ENCODE measurements at regions of chr3 and their contacts with region 1.

Region 1: DNA sequence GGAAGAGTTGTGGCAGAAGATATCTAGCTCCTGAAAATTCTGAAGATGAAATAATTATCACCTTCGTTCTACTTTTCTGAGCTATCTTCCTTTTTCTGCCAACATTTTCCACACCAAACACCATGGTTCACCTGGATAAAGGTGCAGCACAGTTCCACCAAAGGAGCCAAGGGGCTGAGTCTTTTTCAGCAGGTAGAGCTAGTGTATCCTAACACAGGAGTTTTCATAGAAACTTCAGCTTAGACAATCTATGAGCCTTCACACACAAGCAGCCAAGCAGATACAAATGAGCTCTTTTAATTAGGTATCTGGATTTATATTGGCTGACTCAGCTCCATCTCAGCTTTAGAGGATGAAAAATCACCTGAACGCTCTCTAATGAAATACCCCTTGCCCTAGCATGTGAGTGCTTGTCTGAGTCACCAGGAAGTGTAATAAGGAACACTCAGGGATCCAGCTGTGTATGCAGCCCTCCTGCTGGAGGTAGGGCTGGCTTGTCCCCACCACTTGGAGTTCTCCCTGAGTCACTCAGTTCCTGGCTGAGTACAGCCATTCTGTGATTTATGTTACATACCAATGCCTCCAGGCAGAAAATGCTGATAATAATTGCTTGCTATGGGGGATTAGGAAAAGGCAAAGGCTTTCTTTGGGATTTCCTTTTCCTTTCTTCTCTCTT is 385.7 kb downstream of the LSAMP start:
- DNase-seq: peak; percentile 98
- H3K4me3 ChIP-seq: no peak overlapping the region
- H3K27ac ChIP-seq: peak overlapping the region; percentile 62
- H3K4me1 ChIP-seq: peaks cover 13% of the 10 kb centered on the region
- H3K27me3 ChIP-seq: no peaks in the 10 kb centered on the region
- CTCF ChIP-seq: peak in 1 of 2 donors; percentile 20

Region 2: DNA sequence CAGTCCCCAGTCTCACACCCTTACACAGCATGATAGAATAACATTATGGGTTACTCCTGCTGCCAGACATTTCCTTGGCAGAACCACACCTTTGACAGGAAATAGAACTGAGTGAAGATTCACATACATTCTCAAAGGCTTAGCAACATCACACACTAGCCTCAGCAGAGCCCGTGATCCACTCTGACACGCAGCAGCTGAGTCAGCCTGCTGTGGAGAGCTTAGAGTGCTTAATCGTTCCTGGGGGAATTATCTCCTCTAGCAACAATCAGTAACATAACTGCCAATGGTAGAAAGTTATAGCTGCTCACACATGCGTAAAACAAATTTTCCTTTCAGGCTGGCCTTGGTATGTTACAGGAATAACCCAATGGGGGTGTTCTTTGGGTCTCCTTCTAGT is 54.2 kb before region 1 on chr3:
- CTCF ChIA-PET with region 1: no interaction called
- dilution Hi-C with region 1: no loop called
- in situ Hi-C with region 1: no loop called
- intact Hi-C with region 1: loop called (anchors 2 kb)
- DNase-seq: peak; percentile 95
- H3K4me3 ChIP-seq: no peak overlapping the region
- H3K27ac ChIP-seq: peak overlapping the region; percentile 91
- H3K4me1 ChIP-seq: peaks cover 36% of the 10 kb centered on the region
- H3K27me3 ChIP-seq: no peaks in the 10 kb centered on the region
- CTCF ChIP-seq: no peak

Region 3: DNA sequence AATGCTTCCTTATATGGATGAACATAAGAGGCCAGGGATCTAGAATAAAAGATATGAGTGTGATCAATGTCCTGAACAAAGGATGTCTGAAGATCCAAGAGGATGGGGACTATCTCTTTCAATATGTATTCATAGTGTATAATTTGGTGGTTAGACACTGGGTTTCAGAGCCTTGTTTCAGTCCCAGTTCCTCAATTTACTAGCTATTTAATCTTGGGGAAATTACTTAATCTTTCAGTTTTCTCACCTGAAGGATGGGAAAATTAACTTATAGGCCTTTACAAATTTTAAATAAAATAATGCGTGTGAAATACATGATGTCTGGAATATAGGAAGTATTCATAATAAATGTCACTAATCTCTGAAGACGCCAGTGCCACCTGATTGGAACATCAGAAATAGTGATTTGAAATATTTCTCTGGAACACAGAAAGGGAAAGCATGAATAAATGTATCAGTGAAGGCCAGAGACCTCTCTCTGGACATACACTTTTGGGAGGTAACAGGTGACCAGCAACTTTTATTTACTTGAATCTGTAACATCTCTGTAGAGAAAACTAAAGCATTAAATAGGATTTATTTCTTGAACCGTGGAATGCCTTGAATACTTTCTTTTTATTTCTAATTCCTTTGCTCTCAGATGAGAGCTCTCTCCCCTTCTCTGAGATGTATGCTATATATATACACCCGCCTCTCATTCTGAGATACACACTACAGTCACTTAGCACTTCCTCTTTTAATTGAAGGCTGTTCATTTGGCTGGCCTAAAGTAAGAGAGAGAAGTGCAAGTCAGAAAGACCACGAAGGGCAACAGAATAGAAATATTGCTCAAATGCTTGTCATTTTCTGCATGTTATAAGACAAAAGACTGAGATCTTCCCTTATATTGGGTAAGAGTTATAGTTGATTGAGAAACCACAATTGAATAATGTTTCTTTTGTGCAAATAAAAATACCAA is 21.3 kb before region 1 on chr3:
- CTCF ChIA-PET with region 1: no interaction called
- dilution Hi-C with region 1: no loop called
- in situ Hi-C with region 1: no loop called
- intact Hi-C with region 1: no loop called
- DNase-seq: peak; percentile 33
- H3K4me3 ChIP-seq: no peak overlapping the region
- H3K27ac ChIP-seq: no peak overlapping the region
- H3K4me1 ChIP-seq: peaks cover 16% of the 10 kb centered on the region
- H3K27me3 ChIP-seq: no peaks in the 10 kb centered on the region
- CTCF ChIP-seq: no peak

Region 4: DNA sequence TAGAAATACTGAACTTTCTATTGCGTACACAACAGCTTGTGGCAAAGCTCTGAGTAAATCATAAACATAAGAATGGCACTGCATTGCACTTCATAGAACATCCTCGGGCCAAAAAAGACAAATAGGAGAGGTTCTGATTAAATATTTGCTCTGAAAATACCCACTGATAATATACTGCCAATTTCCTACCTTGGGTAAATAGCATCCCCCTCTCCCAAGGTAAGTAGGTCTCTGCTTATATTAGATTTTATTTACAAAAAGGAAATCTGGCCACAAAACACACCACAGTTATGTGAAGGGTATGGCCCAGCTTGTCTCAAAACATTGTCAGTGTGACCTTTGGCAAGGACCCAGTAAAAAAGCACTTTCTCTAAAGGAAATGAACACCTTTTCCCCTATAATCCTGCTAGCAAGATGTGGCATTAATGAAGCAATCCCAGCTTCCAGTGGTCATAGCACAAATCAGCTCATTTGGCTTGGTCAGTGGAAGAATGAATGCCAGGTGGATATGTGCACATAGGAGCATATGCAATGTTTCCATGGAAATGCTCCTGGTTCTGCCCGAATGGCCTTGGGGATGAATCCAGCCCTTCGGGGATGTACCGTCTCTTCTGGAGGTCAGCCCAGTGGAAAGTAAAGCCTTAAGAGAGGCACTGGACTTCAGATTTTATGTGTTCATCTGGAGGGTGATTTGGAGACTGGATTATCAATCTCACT is 69.8 kb after region 1 on chr3:
- CTCF ChIA-PET with region 1: no interaction called
- dilution Hi-C with region 1: no loop called
- in situ Hi-C with region 1: no loop called
- intact Hi-C with region 1: loop called (anchors 10 kb)
- DNase-seq: no peak
- H3K4me3 ChIP-seq: no peak overlapping the region
- H3K27ac ChIP-seq: no peak overlapping the region
- H3K4me1 ChIP-seq: no peaks in the 10 kb centered on the region
- H3K27me3 ChIP-seq: no peaks in the 10 kb centered on the region
- CTCF ChIP-seq: no peak

Region 5: GRCh38 chr3:116140100-116140689 is 80.6 kb after region 1 on chr3:
- CTCF ChIA-PET with region 1: no interaction called
- dilution Hi-C with region 1: no loop called
- in situ Hi-C with region 1: no loop called
- intact Hi-C with region 1: no loop called
- DNase-seq: peak; percentile 15
- H3K4me3 ChIP-seq: no peak overlapping the region
- H3K27ac ChIP-seq: no peak overlapping the region
- H3K4me1 ChIP-seq: no peaks in the 10 kb centered on the region
- H3K27me3 ChIP-seq: no peaks in the 10 kb centered on the region
- CTCF ChIP-seq: peak; percentile 71 to 86